ENCODE measurements at regions of chr12 and their contacts with region 1.

Region 1: DNA sequence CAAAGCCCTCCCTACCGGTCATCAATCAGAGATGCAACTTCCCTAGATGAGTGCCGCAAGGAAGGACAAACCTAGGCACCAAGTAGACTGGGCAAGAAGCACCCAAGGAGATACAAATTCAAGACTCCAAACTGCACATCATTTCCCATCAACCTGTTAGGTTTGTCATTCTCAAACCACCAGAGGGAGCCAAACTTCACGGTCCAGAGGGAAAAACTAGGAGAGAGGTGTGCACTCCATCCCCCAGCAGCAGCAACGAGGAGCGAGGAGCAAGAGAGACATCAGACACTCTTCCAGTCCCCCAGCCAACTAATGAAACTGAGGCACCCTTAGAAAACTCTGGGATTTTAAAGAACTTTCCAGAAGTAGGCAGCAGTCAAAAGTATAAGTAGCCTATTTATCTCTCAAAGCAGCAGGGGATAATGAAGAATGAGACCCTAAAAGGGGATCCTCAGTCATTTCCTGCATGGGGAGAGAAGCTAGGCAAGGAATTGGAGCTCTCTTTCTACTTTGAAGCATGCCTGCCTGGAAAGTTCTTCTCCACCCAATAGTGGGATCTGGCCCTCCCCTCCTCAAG is 37.0 kb upstream of the NT5DC3 start:
- DNase-seq: peak in 1 of 2 donors; percentile 57
- ATAC-seq: peak in 7 of 8 donors; percentile 73 to 86 (median 75)
- H3K4me3 ChIP-seq: no peak overlapping the region
- H3K27ac ChIP-seq: no peak overlapping the region
- H3K4me1 ChIP-seq: no peaks in the 10 kb centered on the region
- H3K27me3 ChIP-seq: no peaks in the 10 kb centered on the region
- CTCF ChIP-seq: peak; percentile 51 to 76 (median 74)

Region 2: GRCh38 chr12:103771466-103771865 is 106.6 kb before region 1 on chr12:
- intact Hi-C with region 1: loop called in 1 of 10 experiments (anchors 5 kb)
- DNase-seq: peak in 1 of 2 donors; percentile 18
- ATAC-seq: peak in 6 of 8 donors; percentile 33 to 62 (median 45)
- H3K4me3 ChIP-seq: no peak overlapping the region
- H3K27ac ChIP-seq: no peak overlapping the region
- H3K4me1 ChIP-seq: peaks cover 0 to 19% (median 2%) of the 10 kb centered on the region in 9 donors
- H3K27me3 ChIP-seq: no peaks in the 10 kb centered on the region
- CTCF ChIP-seq: peak in 7 of 9 donors; percentile 26 to 56 (median 34)

Region 3: GRCh38 chr12:103930034-103930786 is 52.2 kb after region 1 on chr12 and contains the start of gene HSP90B1:
- intact Hi-C with region 1: loop called in 3 of 10 experiments (anchors 2 to 5 kb)
- DNase-seq: peak; percentile 98 to 100
- ATAC-seq: peak; percentile 91 to 95 (median 94)
- H3K4me3 ChIP-seq: peak within 1 kb of the TSS; percentile 61 to 95 (median 78)
- H3K27ac ChIP-seq: peak within 1 kb of the TSS; percentile 88 to 98 (median 94)
- H3K4me1 ChIP-seq: peaks cover 5 to 61% (median 50%) of the 10 kb centered on the region in 9 donors
- H3K27me3 ChIP-seq: no peaks in the 10 kb centered on the region
- CTCF ChIP-seq: no peak
- total RNA-seq, gene HSP90B1: 235 to 487 (median 297) TPM

Measured in heart right ventricle (tissue), 16 donors.